Activated CD4-positive, alpha-beta T cell treated with anti-CD3 and anti-CD28 coated beads for 36 hours (primary cell): ENCODE measurements at regions of chr4 and their contacts with region 1.

Region 1: DNA sequence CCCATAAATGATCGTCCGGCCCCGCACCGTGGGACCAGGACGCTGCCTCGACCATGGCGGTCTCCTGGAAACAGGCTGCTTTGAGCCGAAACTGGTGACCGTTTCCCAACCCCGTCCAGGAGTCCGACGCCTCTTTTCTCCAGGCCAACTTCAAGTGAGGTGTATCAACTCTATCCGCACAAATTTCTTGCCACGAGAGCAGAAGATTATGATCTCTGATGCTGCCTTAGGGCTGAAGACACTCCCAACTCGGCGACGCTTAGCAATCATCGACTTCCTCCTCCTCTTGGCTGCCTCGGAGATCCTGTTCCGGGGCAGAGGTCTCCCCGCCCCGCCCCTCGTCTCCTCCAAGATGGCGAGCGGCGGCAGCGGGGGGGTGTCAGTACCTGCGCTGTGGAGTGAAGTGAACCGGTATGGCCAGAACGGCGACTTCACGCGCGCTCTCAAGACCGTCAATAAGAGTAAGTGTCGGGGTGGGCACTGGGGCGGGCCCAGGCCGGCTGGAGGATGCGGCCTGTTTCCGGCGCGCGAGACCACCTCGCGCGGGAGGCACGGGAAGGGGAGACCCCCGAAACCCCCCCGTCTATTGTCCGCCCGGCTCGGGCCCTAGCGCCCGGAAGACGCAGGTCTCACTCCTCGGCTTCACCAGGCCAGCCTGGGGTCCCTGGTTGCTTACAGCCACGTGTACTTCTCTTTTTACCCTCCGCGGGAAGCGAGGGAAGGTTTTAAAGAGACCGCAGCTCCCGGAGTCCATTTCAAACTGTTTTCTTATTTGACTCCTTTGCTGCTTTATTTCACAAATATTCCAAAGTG is at the start of gene SRP72:
- DNase-seq: peak; percentile 94
- ATAC-seq: peak; percentile 92
- H3K4me3 Mint-ChIP-seq: peak within 1 kb of the TSS; percentile 100
- H3K27ac Mint-ChIP-seq: peak within 1 kb of the TSS; percentile 99
- H3K4me1 Mint-ChIP-seq: peaks cover 50% of the 10 kb centered on the region
- H3K27me3 Mint-ChIP-seq: no peaks in the 10 kb centered on the region
- total RNA-seq, gene SRP72: 181 to 204 TPM

Region 2: GRCh38 chr4:56387023-56388001 is 80.2 kb before region 1 on chr4 and contains the start of gene AASDH:
- CTCF ChIA-PET with region 1: interaction called, 3 read pairs
- POLR2A ChIA-PET with region 1: interaction called, 5 read pairs
- intact Hi-C with region 1: loop called (anchors 1 to 2 kb)
- DNase-seq: peak; percentile 97
- ATAC-seq: peak; percentile 94
- H3K4me3 Mint-ChIP-seq: peak within 1 kb of the TSS; percentile 98
- H3K27ac Mint-ChIP-seq: peak within 1 kb of the TSS; percentile 100
- H3K4me1 Mint-ChIP-seq: peaks cover 31% of the 10 kb centered on the region
- H3K27me3 Mint-ChIP-seq: no peaks in the 10 kb centered on the region
- total RNA-seq, gene AASDH: 13.3 to 16.4 TPM

Region 3: GRCh38 chr4:56530269-56531148 is 63.0 kb after region 1 on chr4:
- CTCF ChIA-PET with region 1: interaction called, 4 read pairs
- POLR2A ChIA-PET with region 1: interaction called, 3 read pairs
- intact Hi-C with region 1: loop called (anchors 1 to 2 kb)
- DNase-seq: peak; percentile 92
- ATAC-seq: peak; percentile 99
- H3K4me3 Mint-ChIP-seq: no peak overlapping the region
- H3K27ac Mint-ChIP-seq: peak overlapping the region; percentile 11
- H3K4me1 Mint-ChIP-seq: peaks cover 3% of the 10 kb centered on the region
- H3K27me3 Mint-ChIP-seq: peaks cover 3% of the 10 kb centered on the region

Region 4: DNA sequence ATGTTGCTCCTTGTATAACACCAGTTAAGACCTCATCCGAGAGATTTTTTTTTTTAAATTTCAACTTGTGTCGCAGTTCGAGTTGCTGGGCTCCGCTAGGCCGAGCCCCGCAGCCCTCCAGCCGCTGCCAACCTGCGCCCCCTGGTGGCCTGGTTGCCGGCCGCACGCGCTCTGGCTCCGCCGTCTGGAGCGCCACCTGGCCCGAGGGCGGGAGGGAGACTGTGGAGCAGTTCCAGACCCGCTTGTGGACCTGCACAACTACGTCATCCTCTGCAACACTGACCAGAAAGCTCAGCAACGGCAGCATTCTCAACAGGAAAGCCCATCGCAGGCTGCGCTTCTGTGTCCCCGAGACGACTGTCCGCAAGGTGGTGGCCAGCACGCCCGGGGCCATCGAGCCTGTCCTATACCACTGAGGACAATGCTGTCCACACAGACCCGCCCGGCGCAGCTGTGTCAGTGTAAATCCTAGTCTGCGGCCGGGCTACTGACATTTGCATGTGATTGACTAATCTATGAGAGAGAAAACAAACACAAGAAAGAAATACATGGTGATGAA is 77.2 kb after region 1 on chr4:
- CTCF ChIA-PET with region 1: no interaction called
- POLR2A ChIA-PET with region 1: no interaction called
- intact Hi-C with region 1: loop called in 1 of 2 experiments (anchors 1 kb)
- DNase-seq: peak; percentile 92
- ATAC-seq: peak; percentile 100
- H3K4me3 Mint-ChIP-seq: peak overlapping the region; percentile 54
- H3K27ac Mint-ChIP-seq: no peak overlapping the region
- H3K4me1 Mint-ChIP-seq: peaks cover 16% of the 10 kb centered on the region
- H3K27me3 Mint-ChIP-seq: peaks cover 3% of the 10 kb centered on the region

Region 5: DNA sequence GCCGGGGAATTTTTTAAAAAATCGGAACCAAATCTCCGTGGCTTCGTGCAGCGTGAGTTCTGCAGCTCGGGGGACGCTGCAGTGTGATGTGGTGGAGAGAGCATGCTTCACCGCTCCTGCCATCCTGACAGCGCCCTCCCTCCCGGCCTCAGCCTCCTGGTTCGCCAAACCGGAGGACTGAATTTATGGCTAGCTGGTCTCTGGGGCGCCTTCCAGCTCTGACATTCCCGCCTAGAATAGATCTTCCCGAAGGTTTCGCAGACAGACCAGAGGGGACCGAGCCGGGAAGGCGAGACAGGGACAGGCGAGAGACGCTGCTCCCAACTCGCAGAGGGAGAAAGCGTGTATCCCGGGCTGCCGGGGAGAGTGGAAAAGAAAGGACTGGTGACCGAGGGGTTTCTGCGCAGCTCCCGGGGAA is 187.7 kb after region 1 on chr4:
- CTCF ChIA-PET with region 1: no interaction called
- POLR2A ChIA-PET with region 1: no interaction called
- intact Hi-C with region 1: loop called in 1 of 2 experiments (anchors 2 kb)
- DNase-seq: peak; percentile 43
- ATAC-seq: no peak
- H3K4me3 Mint-ChIP-seq: peak overlapping the region; percentile 86
- H3K27ac Mint-ChIP-seq: peak overlapping the region; percentile 66
- H3K4me1 Mint-ChIP-seq: peaks cover 61% of the 10 kb centered on the region
- H3K27me3 Mint-ChIP-seq: peaks cover 18% of the 10 kb centered on the region

Region 6: GRCh38 chr4:56843421-56843899 is 376.0 kb after region 1 on chr4:
- CTCF ChIA-PET with region 1: interaction called, 3 read pairs
- POLR2A ChIA-PET with region 1: no interaction called
- intact Hi-C with region 1: loop called in 1 of 2 experiments (anchors 5 kb)
- DNase-seq: no peak
- ATAC-seq: no peak
- H3K4me3 Mint-ChIP-seq: no peak overlapping the region
- H3K27ac Mint-ChIP-seq: no peak overlapping the region
- H3K4me1 Mint-ChIP-seq: no peaks in the 10 kb centered on the region
- H3K27me3 Mint-ChIP-seq: no peaks in the 10 kb centered on the region